ENCODE measurements at regions of chr12 and their contacts with region 1.

Region 1: GRCh38 chr12:117025481-117026151 is 73.6 kb downstream of the TESC start:
- DNase-seq: peak; percentile 79 to 90
- H3K4me3 ChIP-seq: no peak overlapping the region
- H3K27ac ChIP-seq: peak overlapping the region in 3 of 5 donors; percentile 58 to 60 (median 59)
- H3K4me1 ChIP-seq: peaks cover 7 to 32% (median 22%) of the 10 kb centered on the region in 4 donors
- H3K27me3 ChIP-seq: no peaks in the 10 kb centered on the region
- CTCF ChIP-seq: peak in 6 of 7 experiments; percentile 70 to 97 (median 88)
- EP300 ChIP-seq: no peak
- POLR2A ChIP-seq: no peak

Region 2: GRCh38 chr12:117119592-117120198 is 94.1 kb after region 1 on chr12:
- intact Hi-C with region 1: loop called (anchors 5 kb)
- DNase-seq: no peak
- H3K4me3 ChIP-seq: no peak overlapping the region
- H3K27ac ChIP-seq: no peak overlapping the region
- H3K4me1 ChIP-seq: peaks cover 4 to 23% (median 12%) of the 10 kb centered on the region in 4 donors
- H3K27me3 ChIP-seq: no peaks in the 10 kb centered on the region
- CTCF ChIP-seq: peak in 5 of 7 experiments; percentile 49 to 81 (median 65)
- EP300 ChIP-seq: no peak
- POLR2A ChIP-seq: no peak

Measured in stomach (tissue), 19 donors.